ENCODE measurements at regions of chr10 and their contacts with region 1.

Region 1: DNA sequence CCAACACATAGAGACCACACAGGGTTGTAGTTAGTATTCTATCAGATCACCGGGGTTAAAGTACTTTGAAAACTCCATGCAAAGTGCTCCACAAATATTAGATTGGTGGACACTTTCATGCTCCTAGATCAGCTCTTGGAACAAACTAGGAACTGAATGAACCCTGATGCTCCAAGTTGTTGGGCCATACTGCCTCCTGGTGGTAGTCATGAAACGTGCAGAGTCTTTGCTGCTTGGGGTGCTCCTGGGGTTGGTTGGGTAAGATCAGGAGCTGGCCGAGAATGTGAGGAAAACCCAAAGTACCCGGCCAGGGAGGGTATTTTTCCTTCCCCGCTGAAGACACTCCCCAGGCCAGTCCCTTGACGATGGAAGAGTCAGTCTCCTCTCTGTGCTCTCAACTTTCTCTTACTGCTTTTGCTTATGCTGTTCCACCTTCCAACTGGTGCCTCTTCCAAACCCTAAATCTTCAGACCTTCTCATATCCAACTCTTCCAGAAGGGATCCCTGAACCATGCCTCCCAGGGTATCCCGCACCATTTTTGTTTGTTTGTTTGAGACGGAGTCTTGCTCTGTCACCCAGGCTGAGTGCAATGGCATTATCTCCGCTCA is 920 bp upstream of the RPEL1 start:
- DNase-seq: peak; percentile 77
- H3K4me3 Mint-ChIP-seq: no peak overlapping the region
- H3K27ac Mint-ChIP-seq: no peak overlapping the region
- H3K4me1 Mint-ChIP-seq: peaks cover 9% of the 10 kb centered on the region
- H3K27me3 Mint-ChIP-seq: no peaks in the 10 kb centered on the region

Region 2: DNA sequence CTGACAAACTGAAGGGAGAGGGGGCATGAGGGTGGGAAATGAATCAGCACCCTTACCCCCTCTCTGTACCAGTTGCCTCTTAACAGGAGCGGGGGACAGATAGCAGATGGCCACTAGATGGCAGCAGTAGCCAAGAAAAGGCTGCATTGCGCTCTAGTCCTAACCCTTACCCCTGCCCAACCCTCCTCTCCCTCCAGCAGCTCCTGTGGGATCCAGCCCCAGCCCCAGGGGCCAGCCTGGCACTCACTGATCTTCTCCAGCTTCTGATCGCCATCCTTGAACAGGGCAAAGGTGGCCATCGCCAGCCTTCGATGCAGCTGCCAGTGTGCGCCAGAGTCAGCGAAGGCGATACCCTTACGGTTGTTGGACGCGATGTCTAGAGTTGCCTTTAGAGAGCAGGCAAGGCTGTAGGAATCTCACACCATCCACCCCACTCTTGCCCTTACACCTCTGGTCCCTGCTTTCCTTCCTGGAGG is 409.7 kb before region 1 on chr10:
- CTCF ChIA-PET with region 1: interaction called, 26 read pairs
- POLR2A ChIA-PET with region 1: no interaction called
- intact Hi-C with region 1: loop called (anchors 1 kb)
- DNase-seq: peak; percentile 82
- H3K4me3 Mint-ChIP-seq: no peak overlapping the region
- H3K27ac Mint-ChIP-seq: no peak overlapping the region
- H3K4me1 Mint-ChIP-seq: peaks cover 3% of the 10 kb centered on the region
- H3K27me3 Mint-ChIP-seq: peaks cover 3% of the 10 kb centered on the region

Region 3: DNA sequence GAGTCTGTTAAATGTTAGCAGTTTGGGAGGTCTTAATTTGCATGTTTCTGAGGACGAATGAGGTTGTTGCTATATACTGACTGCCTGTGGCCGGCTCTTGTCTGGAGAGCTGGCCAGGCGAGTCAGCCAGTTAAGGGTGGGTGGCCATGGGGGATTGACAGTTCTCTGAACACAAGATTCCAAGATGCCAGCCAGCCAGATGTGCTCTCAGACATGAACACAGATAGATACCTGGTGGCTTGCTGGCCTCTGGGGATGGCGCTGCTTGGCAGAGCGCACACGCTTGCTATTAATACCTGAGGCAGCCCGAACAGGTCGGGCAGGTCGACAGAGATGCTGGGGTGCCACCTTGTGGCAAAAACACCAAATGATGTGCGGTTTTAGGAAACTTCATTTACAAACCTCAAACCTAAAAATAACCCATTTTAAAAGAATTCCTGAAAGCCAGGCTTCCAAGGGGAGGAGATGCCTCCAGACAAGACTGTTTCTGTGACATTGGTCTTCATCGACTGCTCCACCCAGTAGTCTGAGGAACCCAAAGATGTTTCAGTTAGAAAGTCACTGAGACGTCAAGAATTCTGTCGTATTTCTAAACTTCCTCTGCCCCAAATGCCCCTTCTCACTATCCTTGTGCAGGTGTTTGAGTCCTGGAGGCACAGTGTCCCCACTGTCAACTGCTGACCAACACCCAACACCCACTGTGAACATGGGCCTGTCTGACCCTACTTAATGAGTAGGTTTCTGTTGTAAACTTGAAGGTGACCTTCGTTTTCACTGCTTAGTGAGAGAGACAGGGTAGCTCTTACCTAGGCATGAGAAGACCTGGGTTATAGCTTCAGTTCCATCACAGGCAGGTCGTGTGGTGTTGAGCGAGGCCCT is 175.1 kb before region 1 on chr10:
- CTCF ChIA-PET with region 1: interaction called, 8 read pairs
- POLR2A ChIA-PET with region 1: no interaction called
- intact Hi-C with region 1: loop called (anchors 2 kb)
- DNase-seq: peak; percentile 80
- H3K4me3 Mint-ChIP-seq: no peak overlapping the region
- H3K27ac Mint-ChIP-seq: no peak overlapping the region
- H3K4me1 Mint-ChIP-seq: peaks cover 19% of the 10 kb centered on the region
- H3K27me3 Mint-ChIP-seq: no peaks in the 10 kb centered on the region

Region 4: GRCh38 chr10:103111031-103111917 is 133.5 kb before region 1 on chr10:
- CTCF ChIA-PET with region 1: interaction called, 12 read pairs
- POLR2A ChIA-PET with region 1: no interaction called
- intact Hi-C with region 1: loop called (anchors 1 kb)
- DNase-seq: no peak
- H3K4me3 Mint-ChIP-seq: no peak overlapping the region
- H3K27ac Mint-ChIP-seq: peak overlapping the region; percentile 60
- H3K4me1 Mint-ChIP-seq: peaks cover 21% of the 10 kb centered on the region
- H3K27me3 Mint-ChIP-seq: no peaks in the 10 kb centered on the region

Region 5: DNA sequence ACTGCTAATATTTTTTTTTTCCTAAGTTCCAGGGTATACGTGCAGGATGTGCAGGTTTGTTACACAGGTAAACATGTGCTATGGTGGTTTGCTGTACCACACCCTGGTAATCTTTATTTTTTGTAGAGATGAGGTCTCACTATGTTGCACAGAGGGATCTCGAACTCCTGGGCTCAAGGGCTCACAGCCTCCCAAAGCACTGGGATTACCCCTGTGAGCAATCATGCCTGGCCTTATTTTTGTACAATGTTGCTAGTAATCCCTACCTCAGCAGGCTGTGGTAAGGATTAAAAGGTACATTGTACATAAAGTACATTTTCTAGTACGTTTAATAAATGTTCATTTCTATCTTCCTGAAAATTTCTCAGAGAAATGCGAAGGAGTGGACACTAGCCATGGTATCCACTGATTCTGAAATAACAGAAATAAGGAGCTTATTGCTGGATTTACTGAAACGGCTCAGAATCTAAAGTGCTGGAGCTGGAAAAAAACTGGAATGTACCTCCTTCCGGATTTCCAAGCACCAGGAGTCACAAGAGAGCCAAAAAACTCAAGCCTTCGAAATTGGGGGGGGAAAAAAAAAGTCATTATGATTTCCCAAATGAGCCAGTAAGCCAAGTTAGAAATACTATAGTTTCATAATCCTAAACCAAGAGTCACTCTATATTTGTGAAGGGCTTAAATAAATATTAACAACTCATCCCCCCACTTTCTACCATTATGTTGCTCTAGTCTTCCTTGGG is 121.3 kb before region 1 on chr10:
- CTCF ChIA-PET with region 1: interaction called, 10 read pairs
- POLR2A ChIA-PET with region 1: no interaction called
- intact Hi-C with region 1: no loop called
- DNase-seq: no peak
- H3K4me3 Mint-ChIP-seq: no peak overlapping the region
- H3K27ac Mint-ChIP-seq: no peak overlapping the region
- H3K4me1 Mint-ChIP-seq: peaks cover 26% of the 10 kb centered on the region
- H3K27me3 Mint-ChIP-seq: no peaks in the 10 kb centered on the region

Region 6: GRCh38 chr10:103192451-103193106 is 52.2 kb before region 1 on chr10:
- CTCF ChIA-PET with region 1: interaction called, 14 read pairs
- POLR2A ChIA-PET with region 1: interaction called, 5 read pairs
- intact Hi-C with region 1: loop called (anchors 2 kb)
- DNase-seq: peak; percentile 81
- H3K4me3 Mint-ChIP-seq: peak overlapping the region; percentile 92
- H3K27ac Mint-ChIP-seq: peak overlapping the region; percentile 92
- H3K4me1 Mint-ChIP-seq: peaks cover 43% of the 10 kb centered on the region
- H3K27me3 Mint-ChIP-seq: no peaks in the 10 kb centered on the region

Region 7: GRCh38 chr10:103231047-103231551 is 13.7 kb before region 1 on chr10:
- CTCF ChIA-PET with region 1: interaction called, 15 read pairs
- POLR2A ChIA-PET with region 1: no interaction called
- intact Hi-C with region 1: no loop called
- DNase-seq: no peak
- H3K4me3 Mint-ChIP-seq: no peak overlapping the region
- H3K27ac Mint-ChIP-seq: no peak overlapping the region
- H3K4me1 Mint-ChIP-seq: no peaks in the 10 kb centered on the region
- H3K27me3 Mint-ChIP-seq: no peaks in the 10 kb centered on the region

Region 8: DNA sequence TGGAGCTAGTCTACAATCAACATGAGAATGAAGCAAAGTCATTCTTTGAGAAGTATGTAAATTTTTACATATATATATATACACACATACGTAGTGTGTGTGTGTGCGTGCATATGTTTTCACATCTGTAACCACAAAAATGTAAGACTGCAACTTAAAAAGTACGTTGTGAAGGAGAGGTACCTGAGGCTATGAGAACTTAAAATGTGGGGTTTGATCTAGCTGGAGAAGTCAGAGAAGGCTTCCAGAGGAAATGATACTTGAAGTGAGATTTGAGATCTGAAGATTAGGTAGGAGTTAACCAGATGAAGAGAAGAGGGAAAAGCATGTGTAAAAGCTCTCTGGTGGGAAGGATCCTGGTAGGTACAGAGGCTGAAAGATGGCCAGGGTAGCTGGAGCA is 128.8 kb after region 1 on chr10:
- CTCF ChIA-PET with region 1: no interaction called
- POLR2A ChIA-PET with region 1: no interaction called
- intact Hi-C with region 1: no loop called
- DNase-seq: no peak
- H3K4me3 Mint-ChIP-seq: no peak overlapping the region
- H3K27ac Mint-ChIP-seq: peak overlapping the region; percentile 44
- H3K4me1 Mint-ChIP-seq: peaks cover 14% of the 10 kb centered on the region
- H3K27me3 Mint-ChIP-seq: no peaks in the 10 kb centered on the region